Activated B cell treated with CpG ODN at 0.5 μM for 24 hours (primary cell): ENCODE measurements at regions of chr7 and their contacts with region 1.

Region 1: DNA sequence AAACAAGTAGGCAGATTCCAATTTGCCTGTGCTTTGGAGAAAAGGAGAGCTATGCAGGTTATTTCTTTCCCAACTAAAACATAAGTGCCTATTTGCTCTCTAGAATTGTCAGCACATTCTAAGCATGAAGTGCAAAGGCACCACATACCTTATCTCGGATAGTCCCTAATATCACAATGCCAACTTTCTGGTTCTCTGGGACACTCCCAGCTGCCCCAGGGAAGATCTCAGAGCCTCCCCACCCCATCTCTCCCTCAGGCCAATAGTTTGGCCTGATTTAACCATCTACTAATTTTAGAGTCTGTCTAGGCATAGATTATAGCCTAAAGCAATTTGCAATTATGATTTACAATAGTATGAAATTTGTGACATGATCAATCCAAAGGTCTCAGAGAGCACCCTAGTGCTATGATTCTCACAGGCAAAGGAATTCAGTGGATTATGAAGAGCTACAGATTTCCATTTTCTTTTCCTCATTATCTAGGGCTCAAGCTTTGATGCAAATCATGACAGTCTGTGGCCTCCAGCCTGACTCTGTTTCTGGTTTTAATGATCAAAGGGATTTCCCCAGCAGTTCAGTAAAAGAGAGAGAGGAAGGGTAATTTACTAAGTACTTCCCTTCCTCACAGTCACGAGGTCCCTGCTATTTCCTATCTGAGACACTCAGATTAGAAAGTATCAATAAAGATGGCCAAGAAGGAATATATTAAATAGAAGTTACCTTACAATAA is 29.0 kb upstream of the IL6 start:
- DNase-seq: no peak
- ATAC-seq: peak; percentile 74
- H3K4me3 Mint-ChIP-seq: peak overlapping the region; percentile 61
- H3K27ac Mint-ChIP-seq: peak overlapping the region; percentile 89
- H3K4me1 Mint-ChIP-seq: peaks cover 93% of the 10 kb centered on the region
- H3K27me3 Mint-ChIP-seq: no peaks in the 10 kb centered on the region
- CTCF ChIP-seq: no peak

Region 2: DNA sequence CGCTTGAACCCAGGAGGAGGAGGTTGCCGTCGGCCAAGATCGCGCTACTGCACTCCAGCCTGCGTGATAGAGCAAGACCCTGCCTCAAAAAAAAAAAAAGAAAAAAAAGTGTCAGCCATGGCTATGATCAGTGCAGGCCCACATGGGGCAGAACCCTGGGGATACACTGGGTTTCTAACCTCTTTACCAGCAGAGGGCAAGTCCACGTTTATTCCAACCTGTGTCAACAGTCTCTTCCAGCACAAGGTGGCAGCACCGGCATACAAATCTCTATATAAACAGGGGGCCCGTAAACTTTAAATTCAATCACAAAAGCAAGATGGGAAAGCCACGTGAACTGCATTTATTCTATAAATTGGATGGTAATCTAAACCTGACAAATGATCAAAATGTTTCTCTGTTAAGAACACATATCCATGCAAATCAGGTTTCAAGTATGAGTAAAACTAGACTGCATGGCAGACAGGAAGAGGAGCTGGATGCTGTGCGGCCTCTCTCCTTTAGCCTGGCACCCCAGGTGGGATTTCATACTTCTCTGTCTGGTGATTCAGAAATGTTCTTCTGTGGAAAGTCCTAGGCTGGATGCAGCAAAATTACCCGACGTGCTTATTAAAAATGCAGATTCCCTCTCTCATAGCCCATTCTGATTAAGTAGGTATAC is 138.1 kb before region 1 on chr7:
- CTCF ChIA-PET with region 1: interaction called, 13 read pairs
- POLR2A ChIA-PET with region 1: interaction called, 20 read pairs
- intact Hi-C with region 1: loop called (anchors 1 kb)
- DNase-seq: peak; percentile 43
- ATAC-seq: peak; percentile 80
- H3K4me3 Mint-ChIP-seq: peak overlapping the region; percentile 36
- H3K27ac Mint-ChIP-seq: peak overlapping the region; percentile 70
- H3K4me1 Mint-ChIP-seq: peaks cover 50% of the 10 kb centered on the region
- H3K27me3 Mint-ChIP-seq: no peaks in the 10 kb centered on the region
- CTCF ChIP-seq: peak; percentile 24

Region 3: DNA sequence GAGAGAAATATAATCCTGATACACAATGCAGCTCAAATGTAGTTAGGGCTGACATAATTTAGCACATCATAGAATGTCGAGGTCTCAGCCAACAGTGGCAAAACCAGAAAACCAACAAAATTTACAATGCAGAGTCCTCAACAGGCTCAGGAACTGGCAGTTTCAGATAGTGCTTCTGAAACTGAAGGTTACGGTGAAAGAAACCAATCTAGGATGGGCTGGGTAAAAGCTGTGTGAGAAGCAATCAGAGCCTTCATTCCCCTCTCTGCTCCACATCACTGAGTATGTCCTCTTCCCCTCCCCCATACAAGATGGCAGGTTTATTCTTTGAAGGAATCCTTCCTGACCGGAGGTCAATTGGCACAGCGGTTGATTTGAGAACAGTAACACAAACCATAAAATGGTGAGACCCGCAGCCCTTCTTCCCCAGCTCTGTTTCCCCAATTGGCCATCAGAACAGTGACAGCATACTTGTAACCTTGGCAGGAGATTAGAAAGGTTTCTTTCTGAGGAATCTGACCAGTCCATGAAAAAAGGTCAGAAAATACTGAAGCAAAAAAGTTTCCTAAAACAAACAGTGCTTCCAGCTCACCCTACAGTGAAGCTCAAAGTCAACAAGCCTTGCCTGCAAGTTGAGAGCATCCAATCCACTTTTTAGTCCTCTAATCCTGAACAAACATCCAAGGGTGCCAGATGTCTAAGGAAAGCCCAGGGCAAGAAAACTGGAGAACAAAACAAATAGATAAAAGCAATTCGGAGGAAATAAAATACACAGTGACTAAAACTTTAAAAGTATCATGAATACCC is 25.0 kb before region 1 on chr7:
- CTCF ChIA-PET with region 1: interaction called, 7 read pairs
- POLR2A ChIA-PET with region 1: interaction called, 35 read pairs
- intact Hi-C with region 1: loop called (anchors 1 kb)
- DNase-seq: no peak
- ATAC-seq: peak; percentile 57
- H3K4me3 Mint-ChIP-seq: peak overlapping the region; percentile 39
- H3K27ac Mint-ChIP-seq: peak overlapping the region; percentile 89
- H3K4me1 Mint-ChIP-seq: peaks cover 93% of the 10 kb centered on the region
- H3K27me3 Mint-ChIP-seq: no peaks in the 10 kb centered on the region
- CTCF ChIP-seq: no peak

Region 4: DNA sequence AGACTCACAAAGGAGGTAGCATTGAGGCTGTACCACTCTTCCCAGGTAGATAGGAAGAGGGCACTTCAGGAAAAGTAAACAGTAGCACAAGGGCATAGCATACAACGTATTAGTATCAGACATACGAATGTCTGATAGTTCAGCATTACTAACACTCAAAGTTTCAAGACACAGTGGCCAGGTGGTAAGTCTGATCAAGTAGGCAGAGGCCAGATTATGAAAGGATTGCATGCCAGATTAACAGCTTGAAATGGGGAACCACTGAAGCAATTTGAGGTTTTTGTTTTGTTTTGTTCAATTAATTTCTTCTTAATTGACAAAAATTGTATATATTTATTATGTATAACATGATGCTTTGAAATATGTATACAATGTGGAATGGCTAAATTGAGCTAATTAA is 16.7 kb before region 1 on chr7:
- CTCF ChIA-PET with region 1: interaction called, 7 read pairs
- POLR2A ChIA-PET with region 1: interaction called, 35 read pairs
- intact Hi-C with region 1: loop called (anchors 1 kb)
- DNase-seq: no peak
- ATAC-seq: no peak
- H3K4me3 Mint-ChIP-seq: peak overlapping the region; percentile 13
- H3K27ac Mint-ChIP-seq: peak overlapping the region; percentile 66
- H3K4me1 Mint-ChIP-seq: peaks cover 93% of the 10 kb centered on the region
- H3K27me3 Mint-ChIP-seq: no peaks in the 10 kb centered on the region
- CTCF ChIP-seq: no peak

Region 5: DNA sequence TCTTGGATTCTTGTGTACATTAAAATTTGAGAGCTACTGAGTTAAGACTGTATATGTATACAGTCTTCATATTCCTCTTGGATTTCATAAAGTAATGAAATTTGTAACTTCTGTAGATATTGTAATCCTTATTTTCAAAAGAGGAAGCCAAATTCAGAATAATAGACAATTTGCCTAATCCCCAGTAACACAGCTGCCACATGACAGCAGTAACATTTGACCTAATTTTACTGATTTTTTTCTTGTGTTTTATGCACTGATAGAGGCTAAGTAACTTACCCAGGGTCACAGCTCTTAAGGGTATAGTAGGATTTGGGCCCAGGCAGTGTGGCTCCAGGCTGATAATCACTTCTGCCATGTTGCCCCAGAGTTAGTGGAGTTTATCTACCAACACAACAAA is 11.4 kb before region 1 on chr7:
- CTCF ChIA-PET with region 1: interaction called, 4 read pairs
- POLR2A ChIA-PET with region 1: interaction called, 20 read pairs
- intact Hi-C with region 1: loop called (anchors 1 kb)
- DNase-seq: no peak
- ATAC-seq: no peak
- H3K4me3 Mint-ChIP-seq: no peak overlapping the region
- H3K27ac Mint-ChIP-seq: peak overlapping the region; percentile 27
- H3K4me1 Mint-ChIP-seq: peaks cover 79% of the 10 kb centered on the region
- H3K27me3 Mint-ChIP-seq: no peaks in the 10 kb centered on the region
- CTCF ChIP-seq: no peak

Region 6: GRCh38 chr7:22712999-22713398 is 15.0 kb after region 1 on chr7:
- CTCF ChIA-PET with region 1: interaction called, 5 read pairs
- POLR2A ChIA-PET with region 1: interaction called, 144 read pairs
- intact Hi-C with region 1: loop called (anchors 1 kb)
- DNase-seq: no peak
- ATAC-seq: peak; percentile 85
- H3K4me3 Mint-ChIP-seq: peak overlapping the region; percentile 66
- H3K27ac Mint-ChIP-seq: peak overlapping the region; percentile 98
- H3K4me1 Mint-ChIP-seq: peaks cover 63% of the 10 kb centered on the region
- H3K27me3 Mint-ChIP-seq: no peaks in the 10 kb centered on the region
- CTCF ChIP-seq: no peak

Region 7: GRCh38 chr7:22718200-22718711 is 20.2 kb after region 1 on chr7:
- CTCF ChIA-PET with region 1: interaction called, 89 read pairs
- POLR2A ChIA-PET with region 1: interaction called, 144 read pairs
- intact Hi-C with region 1: loop called (anchors 1 kb)
- DNase-seq: no peak
- ATAC-seq: no peak
- H3K4me3 Mint-ChIP-seq: no peak overlapping the region
- H3K27ac Mint-ChIP-seq: no peak overlapping the region
- H3K4me1 Mint-ChIP-seq: peaks cover 91% of the 10 kb centered on the region
- H3K27me3 Mint-ChIP-seq: no peaks in the 10 kb centered on the region
- CTCF ChIP-seq: no peak